ENCODE measurements at regions of chr3 and their contacts with region 1.

Region 1: DNA sequence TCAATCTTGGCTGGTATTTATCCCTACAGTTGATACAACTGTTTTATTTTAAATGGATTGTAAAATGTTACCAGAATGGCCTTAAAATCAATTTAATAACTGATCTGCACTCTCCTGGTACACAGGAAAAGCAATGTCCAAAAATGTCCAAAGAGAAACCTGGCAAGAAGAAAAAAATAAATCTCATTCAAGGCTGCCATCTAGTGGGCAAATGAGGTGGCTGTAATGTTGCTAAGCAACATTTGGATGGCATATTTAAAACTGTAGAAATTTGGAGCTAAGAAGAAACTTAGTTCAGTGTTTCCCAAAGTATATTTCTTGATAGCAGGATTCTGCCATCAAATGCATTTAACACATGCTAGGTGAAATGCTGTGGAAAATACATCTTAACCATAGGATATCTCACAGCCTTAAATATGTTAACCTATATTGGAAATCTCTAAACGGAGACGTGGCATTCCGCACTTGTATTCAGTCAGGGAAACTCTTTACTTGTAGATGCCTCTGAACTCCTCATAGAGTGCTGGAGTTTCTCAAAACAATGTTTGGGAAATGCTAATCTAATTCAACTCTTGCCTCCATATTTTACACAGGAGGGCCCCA is 216.8 kb downstream of the ERC2 start:
- DNase-seq: peak in 1 of 2 experiments; percentile 18
- H3K4me3 ChIP-seq: no peak overlapping the region
- H3K27ac ChIP-seq: no peak overlapping the region
- H3K4me1 ChIP-seq: no peaks in the 10 kb centered on the region
- H3K27me3 ChIP-seq: 0 out of 2 replicates have a peak, but pooled peaks cover 4% of the 10 kb centered on the region
- CTCF ChIP-seq: peak; percentile 77

Region 2: GRCh38 chr3:54427941-54428871 is 1823.2 kb before region 1 on chr3:
- CTCF ChIA-PET with region 1: no interaction called
- POLR2A ChIA-PET with region 1: no interaction called
- intact Hi-C with region 1: loop called (anchors 2 kb)
- DNase-seq: peak in 1 of 2 experiments; percentile 37
- H3K4me3 ChIP-seq: no peak overlapping the region
- H3K27ac ChIP-seq: no peak overlapping the region
- H3K4me1 ChIP-seq: no peaks in the 10 kb centered on the region
- H3K27me3 ChIP-seq: peaks cover 6% of the 10 kb centered on the region; the same call in 1 of the 2 replicates
- CTCF ChIP-seq: peak; percentile 74

Region 3: GRCh38 chr3:54830658-54831057 is 1420.8 kb before region 1 on chr3:
- CTCF ChIA-PET with region 1: no interaction called
- POLR2A ChIA-PET with region 1: no interaction called
- intact Hi-C with region 1: loop called (anchors 2 kb)
- DNase-seq: peak in 1 of 2 experiments; percentile 18
- H3K4me3 ChIP-seq: no peak overlapping the region
- H3K27ac ChIP-seq: no peak overlapping the region
- H3K4me1 ChIP-seq: no peaks in the 10 kb centered on the region
- H3K27me3 ChIP-seq: no peaks in the 10 kb centered on the region
- CTCF ChIP-seq: peak; percentile 84

Region 4: DNA sequence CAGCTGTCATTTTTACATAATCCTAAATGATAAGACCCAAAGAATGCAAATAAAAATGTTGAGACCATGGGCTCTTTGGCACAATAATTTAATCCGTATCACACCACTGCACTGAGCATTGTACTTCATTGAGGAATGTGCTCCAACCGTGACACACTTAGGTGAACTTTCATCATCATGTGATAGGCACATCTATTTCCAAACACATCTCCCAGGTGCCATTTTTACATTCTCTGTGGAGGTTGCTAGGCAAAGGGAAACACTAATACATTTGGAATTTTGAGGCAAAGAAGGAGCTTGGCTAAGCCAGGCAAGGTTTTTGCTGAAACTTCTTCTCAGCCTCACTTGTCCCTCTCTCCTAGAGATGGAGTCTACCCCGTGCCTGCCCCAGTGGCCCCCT is 1392.3 kb before region 1 on chr3:
- CTCF ChIA-PET with region 1: no interaction called
- POLR2A ChIA-PET with region 1: no interaction called
- intact Hi-C with region 1: loop called (anchors 2 kb)
- DNase-seq: peak in 1 of 2 experiments; percentile 82
- H3K4me3 ChIP-seq: no peak overlapping the region
- H3K27ac ChIP-seq: no peak overlapping the region
- H3K4me1 ChIP-seq: peaks cover 11% of the 10 kb centered on the region; the same call in 1 of the 2 replicates
- H3K27me3 ChIP-seq: no peaks in the 10 kb centered on the region
- CTCF ChIP-seq: no peak

Region 5: GRCh38 chr3:56059731-56060130 is 191.7 kb before region 1 on chr3:
- CTCF ChIA-PET with region 1: no interaction called
- POLR2A ChIA-PET with region 1: no interaction called
- intact Hi-C with region 1: no loop called
- DNase-seq: no peak
- H3K4me3 ChIP-seq: no peak overlapping the region
- H3K27ac ChIP-seq: no peak overlapping the region
- H3K4me1 ChIP-seq: no peaks in the 10 kb centered on the region
- H3K27me3 ChIP-seq: 0 out of 2 replicates have a peak, but pooled peaks cover under 1% of the 10 kb centered on the region
- CTCF ChIP-seq: no peak

Region 6: GRCh38 chr3:56207922-56208321 is 43.5 kb before region 1 on chr3:
- CTCF ChIA-PET with region 1: no interaction called
- POLR2A ChIA-PET with region 1: no interaction called
- intact Hi-C with region 1: no loop called
- DNase-seq: no peak
- H3K4me3 ChIP-seq: no peak overlapping the region
- H3K27ac ChIP-seq: no peak overlapping the region
- H3K4me1 ChIP-seq: no peaks in the 10 kb centered on the region
- H3K27me3 ChIP-seq: peaks cover 11% of the 10 kb centered on the region; the same call in 1 of the 2 replicates
- CTCF ChIP-seq: no peak